Caki2 (cell line): ENCODE measurements at regions of chr12 and their contacts with region 1.

Region 1: DNA sequence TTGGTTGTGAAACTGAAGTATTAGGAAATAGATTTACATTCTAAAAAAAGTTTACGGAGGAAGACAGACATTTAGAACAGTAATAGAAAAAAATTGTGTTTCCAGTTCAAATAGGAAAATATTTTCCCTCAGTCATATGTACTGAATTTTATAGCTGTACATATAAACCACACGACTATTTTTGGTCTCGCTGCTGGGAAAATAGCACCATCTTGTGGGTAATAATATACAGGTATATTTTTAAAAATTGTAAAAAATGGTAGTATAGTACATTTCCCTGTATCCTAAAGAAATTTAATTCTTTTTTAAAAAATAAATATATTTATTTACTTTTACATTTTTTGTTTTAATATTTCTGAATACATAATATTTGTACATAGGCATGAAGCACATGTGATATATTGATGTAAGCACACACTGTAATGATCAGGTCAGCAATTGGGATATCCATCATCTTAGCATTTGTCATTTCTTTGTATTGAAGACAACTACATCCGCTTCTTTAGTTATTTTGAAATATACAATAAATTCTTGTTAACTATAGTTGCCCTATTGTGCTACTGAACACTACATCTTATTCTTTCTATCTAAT is 168.6 kb downstream of the ALX1 start:
- DNase-seq: no peak

Region 2: DNA sequence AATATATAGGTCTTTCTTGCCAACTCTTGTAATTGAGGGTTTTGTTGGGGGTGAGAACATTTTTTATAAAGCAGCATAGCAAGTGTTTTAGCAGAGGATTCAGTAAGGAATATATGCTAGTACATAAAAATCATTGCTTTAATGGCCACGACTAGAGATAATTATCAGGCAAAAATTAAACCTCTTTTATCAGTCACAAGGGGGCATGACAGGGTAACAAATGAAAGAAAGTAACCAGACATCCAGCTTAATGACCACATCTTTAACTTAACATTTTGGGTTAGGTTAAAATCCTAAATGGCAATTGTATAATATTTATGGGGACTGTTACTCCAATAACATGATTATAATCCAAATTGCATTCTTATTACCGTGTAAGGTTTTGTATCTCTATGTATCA is 292.9 kb before region 1 on chr12:
- in situ Hi-C with region 1: loop called (anchors 5 kb)
- DNase-seq: peak; percentile 46

Region 3: DNA sequence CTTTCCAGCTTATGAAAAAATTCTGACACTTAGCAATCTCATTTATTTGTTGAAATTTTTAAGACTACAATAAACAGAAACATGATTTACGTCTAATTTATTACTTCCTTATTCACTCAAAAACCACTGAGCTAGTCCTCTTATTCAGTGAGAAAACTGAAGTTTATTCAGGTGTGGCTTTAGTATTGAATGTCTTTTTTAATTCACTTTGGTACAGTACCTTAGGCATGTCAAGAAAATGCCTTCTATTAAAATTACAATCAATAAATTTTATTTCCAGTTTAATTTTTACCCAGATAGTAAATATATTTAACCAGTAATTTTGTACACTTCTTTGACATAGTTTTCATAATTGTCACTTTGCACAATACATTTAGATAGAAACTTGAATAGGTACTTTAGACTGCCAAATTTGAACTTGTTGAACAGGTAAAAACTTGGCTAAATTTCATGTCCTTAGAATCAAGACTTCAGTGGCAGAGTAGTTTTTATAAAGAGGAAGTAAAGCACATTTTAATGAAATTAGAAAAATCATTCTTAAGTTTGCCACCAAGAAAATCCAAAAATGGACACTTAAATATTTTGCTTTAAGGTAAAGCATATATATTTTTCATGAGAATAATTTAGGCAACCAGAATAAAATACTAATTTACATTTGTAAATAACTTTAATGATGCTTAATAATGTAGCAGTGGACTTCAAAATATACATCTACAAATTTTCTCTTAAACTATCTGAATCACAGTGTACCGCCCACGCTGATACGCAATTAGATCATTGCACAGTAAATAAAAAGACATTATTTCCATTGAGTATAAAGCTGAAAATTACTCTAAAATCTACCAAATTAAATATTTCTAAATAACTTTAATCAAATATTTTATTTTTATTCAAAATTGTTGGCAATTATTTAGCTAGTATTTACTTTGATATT is 228.4 kb after region 1 on chr12:
- in situ Hi-C with region 1: no loop called
- DNase-seq: no peak